BJ (cell line): ENCODE measurements at regions of chr4 and their contacts with region 1.

Region 1: DNA sequence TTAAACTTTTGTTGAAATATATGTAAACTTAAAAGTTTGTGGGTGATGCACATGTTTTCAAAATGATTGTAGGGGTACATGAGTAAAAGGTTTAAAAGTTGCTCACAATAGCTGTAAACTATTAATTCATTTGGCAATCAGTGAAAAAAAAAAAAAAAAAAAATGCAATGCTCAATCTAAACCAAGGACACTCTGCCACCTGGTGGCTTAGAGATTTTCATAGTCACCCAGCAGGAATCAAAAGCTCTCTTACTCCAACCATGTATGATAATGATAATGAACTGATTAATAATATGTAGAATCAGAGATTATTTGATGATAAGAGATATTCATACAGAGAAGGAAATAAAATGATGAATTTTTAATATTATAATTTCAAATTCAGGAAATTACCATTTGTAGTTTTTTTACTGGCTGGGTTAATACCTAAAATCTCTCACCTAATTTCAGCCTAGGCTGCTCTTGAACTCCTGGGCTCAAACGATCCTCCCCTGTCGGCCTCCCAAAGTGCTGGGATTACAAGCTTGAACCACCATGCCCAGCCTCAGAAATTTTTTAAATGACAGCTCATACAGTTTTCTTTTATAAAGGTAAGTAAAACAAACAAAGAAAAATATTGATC is 46.9 kb upstream of the SLC25A4 start:
- DNase-seq: no peak
- H3K4me3 ChIP-seq: no peak overlapping the region
- H3K27me3 ChIP-seq: peaks cover 7% of the 10 kb centered on the region
- CTCF ChIP-seq: peak; percentile 58

Region 2: GRCh38 chr4:184263910-184264732 is 832.0 kb before region 1 on chr4:
- CTCF ChIA-PET with region 1: no interaction called
- POLR2A ChIA-PET with region 1: interaction called, 10 read pairs
- DNase-seq: peak; percentile 29
- H3K4me3 ChIP-seq: no peak overlapping the region
- H3K27me3 ChIP-seq: no peaks in the 10 kb centered on the region
- CTCF ChIP-seq: peak; percentile 82

Region 3: GRCh38 chr4:184983672-184984356 is 112.3 kb before region 1 on chr4:
- CTCF ChIA-PET with region 1: no interaction called
- POLR2A ChIA-PET with region 1: no interaction called
- DNase-seq: no peak
- H3K4me3 ChIP-seq: no peak overlapping the region
- H3K27me3 ChIP-seq: no peaks in the 10 kb centered on the region
- CTCF ChIP-seq: peak; percentile 45

Region 4: DNA sequence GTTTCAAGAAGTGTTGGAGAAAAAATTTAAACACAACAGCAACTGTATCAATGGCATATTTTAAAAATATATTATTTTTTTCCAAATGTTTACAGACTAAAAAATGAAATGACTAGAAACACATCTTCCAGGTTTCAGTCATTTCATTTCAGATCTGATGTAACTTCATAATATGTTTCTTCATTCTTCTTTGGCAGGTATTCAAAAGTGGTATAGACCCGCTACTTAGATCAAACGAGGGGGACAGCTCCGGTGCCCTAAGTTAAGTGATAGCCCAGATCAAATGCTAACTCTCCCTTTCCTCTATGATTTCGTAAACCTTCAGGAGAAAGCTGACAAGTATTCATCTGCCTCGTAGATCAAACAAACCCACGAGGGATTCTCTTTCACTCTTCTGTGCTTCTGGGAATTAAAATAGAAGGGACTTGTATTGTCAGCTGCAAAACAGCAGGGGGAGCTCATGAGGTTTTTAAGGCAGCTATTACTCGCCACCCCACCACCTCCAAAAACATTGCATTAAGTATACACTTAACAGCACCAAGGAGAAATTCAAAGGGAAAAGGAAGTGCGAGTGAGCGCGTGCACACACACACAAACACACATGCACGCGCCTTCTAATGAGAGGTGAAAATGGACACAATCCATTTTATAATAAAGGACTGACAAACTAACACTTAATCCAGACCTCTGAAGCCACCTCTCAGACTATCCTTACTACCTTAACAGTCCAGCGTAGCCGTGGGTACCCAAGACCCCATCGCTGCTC is 56.5 kb before region 1 on chr4:
- CTCF ChIA-PET with region 1: interaction called, 16 read pairs
- POLR2A ChIA-PET with region 1: no interaction called
- DNase-seq: peak; percentile 3
- H3K4me3 ChIP-seq: peak overlapping the region; percentile 18; the same call in 1 of the 2 replicates
- H3K27me3 ChIP-seq: no peaks in the 10 kb centered on the region; the same call in none of the 2 replicates
- CTCF ChIP-seq: peak; percentile 78

Region 5: GRCh38 chr4:185082561-185082960 is 13.6 kb before region 1 on chr4:
- CTCF ChIA-PET with region 1: interaction called, 10 read pairs
- POLR2A ChIA-PET with region 1: no interaction called
- DNase-seq: no peak
- H3K4me3 ChIP-seq: no peak overlapping the region
- H3K27me3 ChIP-seq: peaks cover 2% of the 10 kb centered on the region
- CTCF ChIP-seq: no peak

Region 6: DNA sequence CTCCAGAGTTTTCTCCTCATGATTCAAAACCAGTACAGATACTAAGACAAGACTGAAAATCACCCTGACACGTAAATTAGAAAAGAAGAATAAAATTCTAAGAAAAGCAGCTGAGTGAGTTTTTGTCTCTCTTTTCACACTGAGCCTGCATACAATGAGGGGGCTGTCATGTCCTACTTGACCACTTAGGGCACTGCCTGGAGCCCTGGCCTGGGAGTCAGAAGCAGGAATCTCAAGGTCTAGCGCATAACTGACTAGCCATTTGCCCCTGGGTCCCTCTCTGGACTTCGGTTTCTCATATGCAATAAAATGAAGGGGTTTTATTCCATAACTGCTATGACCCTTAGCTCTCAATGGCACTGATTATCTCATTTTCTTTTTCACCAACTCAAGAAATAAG is 10.2 kb after region 1 on chr4:
- CTCF ChIA-PET with region 1: interaction called, 10 read pairs
- POLR2A ChIA-PET with region 1: no interaction called
- DNase-seq: no peak
- H3K4me3 ChIP-seq: no peak overlapping the region
- H3K27me3 ChIP-seq: peaks cover under 1% of the 10 kb centered on the region; the same call in 1 of the 2 replicates
- CTCF ChIP-seq: no peak

Region 7: DNA sequence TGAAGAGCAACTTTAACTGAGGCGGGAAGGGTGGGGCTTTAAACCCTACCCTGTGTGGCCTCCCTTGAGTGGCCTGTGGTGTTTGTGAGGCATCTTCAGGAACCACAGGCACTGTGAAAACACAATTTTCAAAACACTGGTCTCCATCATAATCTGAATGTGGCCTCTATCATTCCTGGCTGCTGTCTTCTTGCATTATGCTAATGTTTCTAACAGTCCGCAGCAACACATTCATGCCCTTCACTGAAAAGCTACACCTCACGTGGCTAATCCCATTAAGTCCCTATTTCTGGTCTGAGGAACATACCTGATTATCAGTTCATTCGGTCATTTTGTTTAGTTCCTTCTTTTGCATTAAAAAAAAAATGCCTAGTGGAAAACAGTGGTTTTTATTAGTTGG is 1264.4 kb after region 1 on chr4:
- CTCF ChIA-PET with region 1: no interaction called
- POLR2A ChIA-PET with region 1: interaction called, 19 read pairs
- DNase-seq: no peak
- H3K4me3 ChIP-seq: no peak overlapping the region
- H3K27me3 ChIP-seq: no peaks in the 10 kb centered on the region
- CTCF ChIP-seq: no peak